ENCODE measurements at regions of chrX and their contacts with region 1.

Region 1: DNA sequence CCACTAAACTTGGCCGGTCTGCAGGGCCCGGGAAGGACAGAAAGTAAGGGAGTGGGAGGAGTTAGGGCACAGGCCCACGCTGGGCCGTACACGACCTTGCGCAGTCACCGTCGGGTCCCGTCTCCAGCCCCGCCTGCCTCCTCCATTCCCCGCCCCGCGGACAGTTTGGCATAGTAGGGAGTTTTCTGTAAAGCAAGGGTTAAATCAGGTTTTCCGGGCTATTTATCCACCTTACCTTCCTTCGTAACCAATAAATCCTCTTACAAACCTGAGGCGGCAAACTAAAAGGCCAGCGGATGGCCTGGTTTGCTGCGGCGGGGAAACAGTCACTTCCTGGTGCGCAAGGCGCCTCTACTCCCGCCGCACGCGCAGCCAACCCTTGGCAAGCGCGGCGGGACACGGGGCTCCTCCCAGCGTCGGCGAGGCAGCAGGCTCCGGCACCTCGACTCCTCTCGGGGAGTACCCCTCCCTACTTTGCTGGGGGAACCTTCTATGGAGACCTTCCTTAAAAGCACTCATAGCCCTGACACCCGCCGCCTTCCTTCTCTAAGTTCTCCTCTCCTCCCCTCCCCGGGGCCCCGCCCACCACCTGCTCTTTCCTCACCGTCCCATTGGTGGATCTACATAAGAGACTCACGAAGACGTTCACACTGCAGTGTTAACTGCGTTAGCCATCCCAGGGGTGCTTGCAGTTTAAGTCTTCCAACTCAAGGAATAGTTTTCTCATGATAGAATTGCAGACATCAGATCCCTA is at the start of gene TRMT2B:
- DNase-seq: peak; percentile 56 to 88 (median 80)
- ATAC-seq: peak; percentile 85
- H3K4me3 ChIP-seq: peak within 1 kb of the TSS; percentile 51 to 70
- H3K4me3 Mint-ChIP-seq: peak within 1 kb of the TSS; percentile 91
- H3K27ac ChIP-seq: peak within 1 kb of the TSS; percentile 94 to 96
- H3K27ac Mint-ChIP-seq: peak within 1 kb of the TSS; percentile 98
- H3K4me1 ChIP-seq: peaks cover 11% of the 10 kb centered on the region
- H3K4me1 Mint-ChIP-seq: peaks cover 29% of the 10 kb centered on the region
- H3K27me3 ChIP-seq: no peaks in the 10 kb centered on the region
- H3K27me3 Mint-ChIP-seq: no peaks in the 10 kb centered on the region
- CTCF ChIP-seq: no peak
- total RNA-seq, gene TRMT2B: 27.8 to 28.0 TPM

Region 2: DNA sequence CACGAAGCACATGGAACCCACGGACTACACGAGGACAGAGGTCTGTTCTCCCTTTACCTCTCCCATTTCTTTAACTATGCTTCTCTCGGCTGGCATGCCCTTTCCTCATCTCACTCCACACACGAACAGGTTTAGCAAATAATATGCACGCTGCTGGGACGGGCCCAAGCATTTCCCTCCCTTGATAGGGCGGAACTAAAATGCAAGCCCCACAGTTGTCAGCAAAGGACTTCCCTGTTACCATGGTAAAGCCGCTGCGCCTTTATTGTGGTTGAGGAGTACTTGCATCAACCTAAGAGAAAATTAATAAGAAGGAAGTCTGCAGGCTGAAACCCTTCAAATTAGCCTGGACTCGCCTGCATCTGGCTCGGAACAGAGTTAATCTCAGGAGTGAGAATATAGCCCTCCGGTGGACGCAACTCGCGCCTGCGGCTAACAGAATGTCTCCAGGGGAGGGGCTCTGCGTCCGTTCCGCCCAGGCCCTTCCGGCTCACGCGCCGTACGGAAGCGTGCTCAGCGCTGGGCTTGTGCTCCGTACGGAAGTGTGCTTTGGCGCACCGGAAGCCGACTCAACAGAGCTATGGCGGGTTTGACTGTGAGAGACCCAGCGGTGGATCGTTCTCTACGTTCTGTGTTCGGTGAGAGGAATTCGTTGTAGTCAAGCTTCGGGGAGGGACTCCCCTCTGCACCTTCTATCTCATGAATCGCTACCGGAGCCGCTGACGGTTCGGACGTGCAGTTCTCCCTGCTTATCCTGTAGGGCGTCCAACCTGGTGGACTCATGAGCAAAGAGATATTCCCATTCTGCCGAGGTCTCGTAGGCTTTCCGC is 231.7 kb before region 1 on chrX and contains the start of gene CSTF2:
- CTCF ChIA-PET with region 1: no interaction called
- POLR2A ChIA-PET with region 1: no interaction called
- intact Hi-C with region 1: loop called (anchors 1 to 2 kb)
- DNase-seq: peak; percentile 53 to 90 (median 78)
- ATAC-seq: peak; percentile 95
- H3K4me3 ChIP-seq: peak within 1 kb of the TSS; percentile 65 to 83
- H3K4me3 Mint-ChIP-seq: peak within 1 kb of the TSS; percentile 90
- H3K27ac ChIP-seq: peak within 1 kb of the TSS; percentile 87 to 92
- H3K27ac Mint-ChIP-seq: peak within 1 kb of the TSS; percentile 90
- H3K4me1 ChIP-seq: no peaks in the 10 kb centered on the region
- H3K4me1 Mint-ChIP-seq: peaks cover 18% of the 10 kb centered on the region
- H3K27me3 ChIP-seq: no peaks in the 10 kb centered on the region
- H3K27me3 Mint-ChIP-seq: peaks cover 4% of the 10 kb centered on the region
- CTCF ChIP-seq: no peak
- total RNA-seq, gene CSTF2: 10.1 to 10.6 TPM

Region 3: DNA sequence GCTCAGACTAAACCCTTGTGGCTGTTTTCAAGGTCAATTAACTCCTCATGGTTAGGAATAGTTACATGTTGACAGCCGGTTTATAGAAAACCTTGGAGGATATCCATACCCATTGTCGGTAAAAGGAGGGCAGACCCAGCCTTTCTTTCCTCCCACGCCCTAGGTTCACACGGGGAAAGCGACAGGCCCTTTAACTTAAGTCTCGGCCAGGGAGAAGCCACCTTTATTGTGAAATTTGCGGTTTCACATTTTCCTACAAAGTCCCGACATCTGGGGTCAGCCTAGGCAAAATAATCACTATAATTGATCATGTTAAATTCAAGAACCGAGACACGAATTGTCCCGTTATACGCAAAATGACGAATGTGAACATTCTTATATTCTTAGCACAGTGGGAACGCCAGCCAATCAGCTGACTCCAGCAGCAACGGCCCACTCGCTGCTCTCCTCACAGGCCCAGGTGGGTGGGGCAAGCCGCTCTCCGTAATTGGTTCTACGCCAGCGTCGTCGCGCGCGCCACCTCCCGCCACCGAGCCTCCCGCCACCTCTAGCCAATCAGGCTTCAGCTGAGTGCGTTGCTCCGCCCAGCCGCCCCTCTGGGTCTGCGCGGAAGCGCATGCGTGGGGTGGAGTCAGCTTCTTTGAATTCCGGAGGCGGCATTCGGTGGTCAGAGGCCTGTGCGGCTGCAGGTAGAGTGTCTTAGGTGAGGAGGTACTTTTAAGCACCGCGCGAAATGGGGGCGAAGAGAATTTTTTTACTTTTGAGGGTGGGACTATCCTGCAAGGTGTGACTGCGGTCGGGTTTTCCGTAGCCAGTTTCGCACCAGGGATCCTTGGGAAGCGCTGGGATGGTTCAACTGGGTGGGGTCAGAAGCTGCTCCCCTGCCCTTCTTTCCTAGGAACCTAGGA is 46.1 kb after region 1 on chrX and contains the start of gene CENPI:
- CTCF ChIA-PET with region 1: no interaction called
- POLR2A ChIA-PET with region 1: no interaction called
- intact Hi-C with region 1: loop called (anchors 1 to 2 kb)
- DNase-seq: peak; percentile 83 to 95 (median 90)
- ATAC-seq: peak; percentile 99
- H3K4me3 ChIP-seq: peak within 1 kb of the TSS; percentile 50 to 69
- H3K4me3 Mint-ChIP-seq: peak within 1 kb of the TSS; percentile 91
- H3K27ac ChIP-seq: peak within 1 kb of the TSS; percentile 80 to 88
- H3K27ac Mint-ChIP-seq: peak within 1 kb of the TSS; percentile 96
- H3K4me1 ChIP-seq: peaks cover 10% of the 10 kb centered on the region
- H3K4me1 Mint-ChIP-seq: peaks cover 13% of the 10 kb centered on the region
- H3K27me3 ChIP-seq: no peaks in the 10 kb centered on the region
- H3K27me3 Mint-ChIP-seq: no peaks in the 10 kb centered on the region
- CTCF ChIP-seq: no peak
- total RNA-seq, gene CENPI: 0.35 to 0.44 TPM

Region 4: GRCh38 chrX:101276238-101276637 is 224.5 kb after region 1 on chrX:
- CTCF ChIA-PET with region 1: no interaction called
- POLR2A ChIA-PET with region 1: no interaction called
- intact Hi-C with region 1: no loop called
- DNase-seq: no peak
- ATAC-seq: no peak
- H3K4me3 ChIP-seq: no peak overlapping the region
- H3K4me3 Mint-ChIP-seq: no peak overlapping the region
- H3K27ac ChIP-seq: no peak overlapping the region
- H3K27ac Mint-ChIP-seq: no peak overlapping the region
- H3K4me1 ChIP-seq: no peaks in the 10 kb centered on the region
- H3K4me1 Mint-ChIP-seq: no peaks in the 10 kb centered on the region
- H3K27me3 ChIP-seq: no peaks in the 10 kb centered on the region
- H3K27me3 Mint-ChIP-seq: no peaks in the 10 kb centered on the region
- CTCF ChIP-seq: no peak

Region 5: GRCh38 chrX:101390664-101391525 is 339.2 kb after region 1 on chrX and contains the start of gene RPL36A:
- CTCF ChIA-PET with region 1: no interaction called
- POLR2A ChIA-PET with region 1: no interaction called
- intact Hi-C with region 1: loop called in 1 of 2 experiments (anchors 5 kb)
- DNase-seq: peak; percentile 50 to 91 (median 78)
- ATAC-seq: peak; percentile 92
- H3K4me3 ChIP-seq: peak within 1 kb of the TSS; percentile 49 to 69
- H3K4me3 Mint-ChIP-seq: peak within 1 kb of the TSS; percentile 91
- H3K27ac ChIP-seq: peak within 1 kb of the TSS; percentile 53 to 87
- H3K27ac Mint-ChIP-seq: peak within 1 kb of the TSS; percentile 95
- H3K4me1 ChIP-seq: peaks cover 15% of the 10 kb centered on the region
- H3K4me1 Mint-ChIP-seq: peaks cover 30% of the 10 kb centered on the region
- H3K27me3 ChIP-seq: no peaks in the 10 kb centered on the region
- H3K27me3 Mint-ChIP-seq: no peaks in the 10 kb centered on the region
- CTCF ChIP-seq: peak; percentile 54
- total RNA-seq, gene RPL36A: 308 to 378 TPM

Region 6: GRCh38 chrX:101906136-101906796 is 854.5 kb after region 1 on chrX:
- CTCF ChIA-PET with region 1: no interaction called
- POLR2A ChIA-PET with region 1: no interaction called
- intact Hi-C with region 1: no loop called
- DNase-seq: no peak
- ATAC-seq: no peak
- H3K4me3 ChIP-seq: no peak overlapping the region
- H3K4me3 Mint-ChIP-seq: no peak overlapping the region
- H3K27ac ChIP-seq: no peak overlapping the region
- H3K27ac Mint-ChIP-seq: no peak overlapping the region
- H3K4me1 ChIP-seq: no peaks in the 10 kb centered on the region
- H3K4me1 Mint-ChIP-seq: no peaks in the 10 kb centered on the region
- H3K27me3 ChIP-seq: no peaks in the 10 kb centered on the region
- H3K27me3 Mint-ChIP-seq: no peaks in the 10 kb centered on the region
- CTCF ChIP-seq: no peak

Measured in CD8-positive, alpha-beta T cell (primary cell).